ENCODE measurements at regions of chr20 and their contacts with region 1.

Region 1: GRCh38 chr20:14055127-14055742 is 59.9 kb downstream of the MACROD2 start:
- DNase-seq: no peak
- H3K4me3 Mint-ChIP-seq: no peak overlapping the region
- H3K27ac Mint-ChIP-seq: no peak overlapping the region
- H3K4me1 Mint-ChIP-seq: no peaks in the 10 kb centered on the region
- H3K27me3 Mint-ChIP-seq: peaks cover 3% of the 10 kb centered on the region

Region 2: GRCh38 chr20:13819885-13820645 is 235.2 kb before region 1 on chr20:
- CTCF ChIA-PET with region 1: interaction called, 14 read pairs
- POLR2A ChIA-PET with region 1: no interaction called
- DNase-seq: peak; percentile 18
- H3K4me3 Mint-ChIP-seq: no peak overlapping the region
- H3K27ac Mint-ChIP-seq: no peak overlapping the region
- H3K4me1 Mint-ChIP-seq: no peaks in the 10 kb centered on the region
- H3K27me3 Mint-ChIP-seq: no peaks in the 10 kb centered on the region

Region 3: DNA sequence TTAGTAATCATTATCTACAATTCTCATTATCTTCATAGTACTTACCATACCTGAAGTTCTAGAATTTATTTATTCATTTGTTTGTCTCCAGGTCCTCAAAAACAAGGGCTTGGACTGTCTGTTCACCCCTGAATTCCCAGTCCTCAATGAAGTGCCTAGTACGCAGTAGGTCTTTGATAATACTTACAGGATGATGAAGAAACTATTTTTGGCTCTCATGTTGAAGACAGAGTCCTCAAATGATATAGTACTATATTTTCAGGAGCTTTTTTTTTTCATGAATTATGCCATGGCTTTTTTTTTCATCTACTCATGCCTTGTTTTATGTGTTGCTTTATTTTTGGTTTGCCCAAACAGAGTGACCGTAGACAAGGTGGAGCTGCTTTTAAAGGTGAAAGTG is 204.0 kb before region 1 on chr20:
- CTCF ChIA-PET with region 1: no interaction called
- POLR2A ChIA-PET with region 1: no interaction called
- DNase-seq: no peak
- H3K4me3 Mint-ChIP-seq: no peak overlapping the region
- H3K27ac Mint-ChIP-seq: no peak overlapping the region
- H3K4me1 Mint-ChIP-seq: no peaks in the 10 kb centered on the region
- H3K27me3 Mint-ChIP-seq: peaks cover 2% of the 10 kb centered on the region

Region 4: GRCh38 chr20:14329327-14329726 is 274.1 kb after region 1 on chr20:
- CTCF ChIA-PET with region 1: no interaction called
- POLR2A ChIA-PET with region 1: no interaction called
- DNase-seq: no peak
- H3K4me3 Mint-ChIP-seq: no peak overlapping the region
- H3K27ac Mint-ChIP-seq: no peak overlapping the region
- H3K4me1 Mint-ChIP-seq: no peaks in the 10 kb centered on the region
- H3K27me3 Mint-ChIP-seq: no peaks in the 10 kb centered on the region